Activated CD4-positive, alpha-beta memory T cell treated with anti-CD3 and anti-CD28 coated beads for 36 hours (primary cell): ENCODE measurements at regions of chr4 and their contacts with region 1.

Region 1: GRCh38 chr4:2792711-2793585 is at the start of gene SH3BP2:
- DNase-seq: peak; percentile 78
- H3K4me3 Mint-ChIP-seq: peak within 1 kb of the TSS; percentile 83
- H3K27ac Mint-ChIP-seq: peak within 1 kb of the TSS; percentile 87
- H3K4me1 Mint-ChIP-seq: peaks cover 42% of the 10 kb centered on the region
- H3K27me3 Mint-ChIP-seq: no peaks in the 10 kb centered on the region
- total RNA-seq, gene SH3BP2: 55.9 to 62.8 TPM

Region 2: DNA sequence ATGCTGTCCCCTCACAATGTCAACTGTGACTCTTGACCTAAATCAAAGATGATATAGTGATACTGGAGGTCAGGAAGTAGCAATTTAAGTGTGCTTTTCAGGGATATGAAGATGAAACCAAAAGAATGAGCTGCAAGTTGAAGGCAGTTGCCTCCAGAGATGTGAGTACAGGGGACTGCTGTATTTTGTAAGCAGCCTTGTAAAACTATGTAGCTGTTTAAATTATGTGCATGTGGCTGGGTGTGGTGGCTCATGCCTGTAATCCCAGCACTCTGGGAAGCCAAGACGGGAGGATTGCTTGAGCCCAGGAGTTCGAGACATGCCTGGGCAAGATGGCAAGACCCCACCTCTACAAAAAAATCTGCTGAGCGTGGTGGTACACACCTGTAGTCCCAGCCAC is 21.7 kb before region 1 on chr4:
- CTCF ChIA-PET with region 1: no interaction called
- POLR2A ChIA-PET with region 1: interaction called, 4 read pairs
- intact Hi-C with region 1: loop called (anchors 2 kb)
- DNase-seq: no peak
- H3K4me3 Mint-ChIP-seq: no peak overlapping the region
- H3K27ac Mint-ChIP-seq: peak overlapping the region; percentile 56
- H3K4me1 Mint-ChIP-seq: peaks cover 29% of the 10 kb centered on the region
- H3K27me3 Mint-ChIP-seq: no peaks in the 10 kb centered on the region

Region 3: DNA sequence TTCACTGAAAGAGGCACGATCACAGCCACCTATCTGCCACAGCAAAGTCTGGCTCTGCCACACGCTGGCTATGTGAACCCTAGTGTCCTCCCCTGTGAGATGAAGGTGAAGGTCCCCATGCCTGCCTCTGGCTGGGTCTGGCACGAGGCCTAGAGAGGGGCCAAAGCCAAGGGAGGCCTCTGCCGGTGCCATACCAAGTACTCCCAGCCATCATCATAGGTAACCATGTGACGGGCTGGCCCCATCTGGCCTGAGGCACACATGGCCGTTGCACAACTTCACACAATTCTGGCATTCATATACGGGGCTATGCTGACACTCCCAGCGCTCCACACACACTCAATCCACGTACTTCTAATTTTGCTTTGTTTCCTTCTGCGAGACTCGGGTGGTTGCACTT is 155.0 kb after region 1 on chr4:
- CTCF ChIA-PET with region 1: no interaction called
- POLR2A ChIA-PET with region 1: no interaction called
- intact Hi-C with region 1: no loop called
- DNase-seq: no peak
- H3K4me3 Mint-ChIP-seq: no peak overlapping the region
- H3K27ac Mint-ChIP-seq: no peak overlapping the region
- H3K4me1 Mint-ChIP-seq: peaks cover 30% of the 10 kb centered on the region
- H3K27me3 Mint-ChIP-seq: no peaks in the 10 kb centered on the region

Region 4: GRCh38 chr4:2991243-2991642 is 198.3 kb after region 1 on chr4:
- CTCF ChIA-PET with region 1: no interaction called
- POLR2A ChIA-PET with region 1: no interaction called
- intact Hi-C with region 1: no loop called
- DNase-seq: no peak
- H3K4me3 Mint-ChIP-seq: no peak overlapping the region
- H3K27ac Mint-ChIP-seq: no peak overlapping the region
- H3K4me1 Mint-ChIP-seq: no peaks in the 10 kb centered on the region
- H3K27me3 Mint-ChIP-seq: peaks cover 6% of the 10 kb centered on the region